Activated naive CD4-positive, alpha-beta T cell treated with anti-CD3 and anti-CD28 coated beads for 36 hours (primary cell): ENCODE measurements at regions of chr1 and their contacts with region 1.

Region 1: DNA sequence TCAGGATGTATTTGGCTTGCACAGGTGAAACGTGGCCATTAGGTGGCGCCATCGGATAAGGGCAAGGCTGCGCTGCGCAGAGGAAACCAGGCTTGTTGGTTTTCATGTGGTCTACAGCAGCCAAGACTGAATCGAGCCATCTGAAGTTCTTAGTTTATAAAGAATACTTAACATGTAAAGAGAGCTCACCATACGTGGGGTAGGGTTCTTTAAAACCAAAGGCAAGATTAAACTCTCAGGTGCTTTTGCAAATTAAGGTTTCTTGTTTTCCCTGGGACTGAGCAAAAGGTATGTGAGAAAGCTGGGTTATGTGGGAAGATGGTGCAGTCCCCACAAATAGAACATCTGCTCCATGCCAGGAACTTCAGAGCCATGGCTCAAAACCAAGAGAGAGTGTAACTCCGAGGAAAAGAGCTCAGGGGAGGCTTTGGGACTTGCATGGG is 9.3 kb downstream of the MASP2 start:
- DNase-seq: peak; percentile 94
- H3K4me3 Mint-ChIP-seq: no peak overlapping the region
- H3K27ac Mint-ChIP-seq: no peak overlapping the region
- H3K4me1 Mint-ChIP-seq: peaks cover 6% of the 10 kb centered on the region
- H3K27me3 Mint-ChIP-seq: no peaks in the 10 kb centered on the region

Region 2: GRCh38 chr1:11051781-11052511 is 14.2 kb after region 1 on chr1:
- CTCF ChIA-PET with region 1: interaction called, 17 read pairs
- intact Hi-C with region 1: no loop called
- DNase-seq: no peak
- H3K4me3 Mint-ChIP-seq: no peak overlapping the region
- H3K27ac Mint-ChIP-seq: no peak overlapping the region
- H3K4me1 Mint-ChIP-seq: peaks cover 3% of the 10 kb centered on the region
- H3K27me3 Mint-ChIP-seq: no peaks in the 10 kb centered on the region

Region 3: GRCh38 chr1:11072216-11072917 is 34.6 kb after region 1 on chr1:
- CTCF ChIA-PET with region 1: interaction called, 25 read pairs
- intact Hi-C with region 1: no loop called
- DNase-seq: no peak
- H3K4me3 Mint-ChIP-seq: no peak overlapping the region
- H3K27ac Mint-ChIP-seq: no peak overlapping the region
- H3K4me1 Mint-ChIP-seq: peaks cover 8% of the 10 kb centered on the region
- H3K27me3 Mint-ChIP-seq: no peaks in the 10 kb centered on the region

Region 4: GRCh38 chr1:11099310-11100149 is 61.8 kb after region 1 on chr1 and contains the start of gene EXOSC10:
- CTCF ChIA-PET with region 1: interaction called, 18 read pairs
- intact Hi-C with region 1: no loop called
- DNase-seq: peak; percentile 95
- H3K4me3 Mint-ChIP-seq: peak within 1 kb of the TSS; percentile 96
- H3K27ac Mint-ChIP-seq: peak within 1 kb of the TSS; percentile 90
- H3K4me1 Mint-ChIP-seq: peaks cover 8% of the 10 kb centered on the region
- H3K27me3 Mint-ChIP-seq: no peaks in the 10 kb centered on the region
- total RNA-seq, gene EXOSC10: 57.9 to 59.3 TPM

Region 5: GRCh38 chr1:11116318-11116717 is 78.6 kb after region 1 on chr1:
- CTCF ChIA-PET with region 1: interaction called, 11 read pairs
- intact Hi-C with region 1: no loop called
- DNase-seq: no peak
- H3K4me3 Mint-ChIP-seq: no peak overlapping the region
- H3K27ac Mint-ChIP-seq: no peak overlapping the region
- H3K4me1 Mint-ChIP-seq: no peaks in the 10 kb centered on the region
- H3K27me3 Mint-ChIP-seq: no peaks in the 10 kb centered on the region